ENCODE measurements at regions of chr17 and their contacts with region 1.

Region 1: GRCh38 chr17:41642252-41643156 is 18.1 kb upstream of the KRT17 start:
- DNase-seq: no peak
- ATAC-seq: no peak
- H3K4me3 ChIP-seq: no peak overlapping the region
- H3K27ac ChIP-seq: no peak overlapping the region
- H3K4me1 ChIP-seq: peaks cover 0 to 16% (median 0%) of the 10 kb centered on the region in 12 donors
- H3K27me3 ChIP-seq: no peaks in the 10 kb centered on the region
- CTCF ChIP-seq: no peak
- POLR2A ChIP-seq: no peak

Region 2: GRCh38 chr17:41579484-41580243 is 62.8 kb before region 1 on chr17:
- intact Hi-C with region 1: loop called in 5 of 10 experiments (anchors 2 to 10 kb)
- DNase-seq: peak; percentile 59 to 71 (median 65)
- ATAC-seq: peak; percentile 79 to 88 (median 86)
- H3K4me3 ChIP-seq: no peak overlapping the region
- H3K27ac ChIP-seq: no peak overlapping the region
- H3K4me1 ChIP-seq: no peaks in the 10 kb centered on the region
- H3K27me3 ChIP-seq: peaks cover under 1 to 44% (median 5%) of the 10 kb centered on the region in 9 donors
- CTCF ChIP-seq: peak; percentile 53 to 84 (median 74)
- POLR2A ChIP-seq: no peak

Measured in heart left ventricle (tissue), 16 donors.